Gastrocnemius medialis (tissue), 4 donors: ENCODE measurements at regions of chr6 and their contacts with region 1.

Region 1: DNA sequence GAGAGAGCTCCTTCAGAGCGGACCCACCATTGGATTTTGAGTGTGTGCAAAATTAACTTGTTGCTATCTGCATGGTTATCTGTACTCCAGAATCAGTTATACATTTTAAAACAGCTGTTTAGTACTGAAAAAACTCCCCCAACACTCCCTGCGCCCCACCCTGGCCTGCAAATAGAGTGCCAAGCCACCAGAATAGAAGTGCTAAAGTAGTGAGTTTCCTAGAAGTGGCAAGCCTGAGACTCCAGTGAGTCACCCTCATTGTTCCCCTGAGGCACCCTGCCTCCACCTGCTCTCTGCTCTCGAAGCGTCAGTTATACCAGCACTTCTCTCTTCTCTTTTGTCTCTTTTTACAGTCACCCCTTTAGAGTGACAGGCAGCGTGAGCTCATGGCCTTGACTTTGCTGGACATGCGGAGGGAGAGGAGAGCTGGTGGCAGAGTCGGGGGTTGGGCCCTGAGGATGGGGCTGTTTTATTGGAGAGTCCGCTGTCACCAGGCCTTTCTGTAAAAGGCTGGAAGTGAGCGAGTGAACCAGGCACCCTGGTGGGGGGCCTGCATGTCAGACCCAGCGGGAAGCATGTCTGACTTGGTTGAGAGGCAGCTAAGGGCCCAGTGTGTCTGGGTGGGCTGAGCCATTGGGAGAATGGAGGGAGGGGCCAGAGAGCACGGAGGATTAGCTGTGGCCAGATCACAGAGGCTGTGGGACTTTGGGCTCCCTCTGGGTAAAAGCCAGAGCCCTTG is 10.4 kb downstream of the IGF2R start:
- DNase-seq: peak; percentile 57 to 79
- ATAC-seq: peak; percentile 63 to 80
- H3K4me3 ChIP-seq: peak overlapping the region in 1 of 4 donors; percentile 31
- H3K27ac ChIP-seq: peak overlapping the region; percentile 89 to 98 (median 96)
- H3K4me1 ChIP-seq: peaks cover 98 to 99% of the 10 kb centered on the region in 2 donors
- H3K27me3 ChIP-seq: no peaks in the 10 kb centered on the region
- CTCF ChIP-seq: no peak
- POLR2A ChIP-seq: peak in 1 of 2 donors; percentile 39

Region 2: DNA sequence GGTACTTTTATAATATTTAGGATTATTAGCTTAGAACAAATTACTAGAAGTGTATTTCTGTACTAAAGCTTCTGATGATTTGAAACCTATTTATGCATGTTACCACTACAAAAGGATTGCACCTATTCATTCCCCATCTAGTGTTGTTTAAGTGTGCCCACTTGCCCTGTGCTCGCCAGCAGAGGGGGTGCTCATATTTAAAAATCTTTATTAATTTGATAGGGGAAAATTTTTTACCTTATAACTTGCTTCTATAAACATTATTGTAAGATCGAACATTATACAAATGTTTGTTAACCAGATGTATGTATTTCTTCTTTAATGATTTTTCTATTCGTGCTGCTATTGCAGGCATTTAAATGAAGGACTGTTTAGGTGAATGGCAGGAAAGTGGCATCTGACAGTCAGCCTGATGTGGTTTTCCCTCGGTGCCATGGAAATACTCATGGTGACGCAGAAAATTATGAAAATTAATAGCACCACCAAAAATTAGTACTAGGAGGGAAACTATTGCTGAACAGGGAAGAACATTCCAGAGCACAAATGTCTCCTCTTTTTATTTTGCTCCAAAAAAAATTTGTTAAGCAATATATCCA is 854.2 kb before region 1 on chr6:
- in situ Hi-C with region 1: no loop called
- intact Hi-C with region 1: loop called (anchors 5 kb)
- DNase-seq: no peak
- ATAC-seq: no peak
- H3K4me3 ChIP-seq: no peak overlapping the region
- H3K27ac ChIP-seq: peak overlapping the region; percentile 89 to 93 (median 90)
- H3K4me1 ChIP-seq: peaks cover 16 to 40% of the 10 kb centered on the region in 2 donors
- H3K27me3 ChIP-seq: no peaks in the 10 kb centered on the region
- CTCF ChIP-seq: no peak
- POLR2A ChIP-seq: no peak

Region 3: DNA sequence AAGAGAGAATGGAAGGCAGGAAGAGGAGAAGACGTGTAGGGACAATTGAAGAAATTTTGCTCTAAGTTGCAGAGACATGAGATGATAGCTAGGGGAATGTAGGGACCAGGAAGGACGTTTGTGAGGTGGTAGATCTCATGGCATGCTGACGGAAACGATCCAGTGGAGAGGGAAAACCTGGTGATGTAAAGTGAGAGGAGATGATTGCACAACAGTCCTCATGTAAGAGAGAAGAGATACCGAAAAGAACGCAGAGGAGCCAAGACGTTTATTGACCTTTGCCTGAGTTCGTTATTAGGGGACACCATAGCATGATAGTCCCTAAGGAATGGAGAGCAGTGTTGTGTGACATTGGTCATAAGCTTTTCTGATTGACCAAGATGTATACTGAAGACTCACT is 44.8 kb after region 1 on chr6:
- in situ Hi-C with region 1: no loop called
- intact Hi-C with region 1: loop called (anchors 1 kb)
- DNase-seq: peak; percentile 60 to 73
- ATAC-seq: peak; percentile 95
- H3K4me3 ChIP-seq: no peak overlapping the region
- H3K27ac ChIP-seq: peak overlapping the region; percentile 78 to 81 (median 80)
- H3K4me1 ChIP-seq: peaks cover 34 to 35% of the 10 kb centered on the region in 2 donors
- H3K27me3 ChIP-seq: no peaks in the 10 kb centered on the region
- CTCF ChIP-seq: no peak
- POLR2A ChIP-seq: no peak

Region 4: GRCh38 chr6:160030103-160030502 is 50.8 kb after region 1 on chr6:
- in situ Hi-C with region 1: loop called in 1 of 4 experiments (anchors 10 kb)
- intact Hi-C with region 1: no loop called
- DNase-seq: peak; percentile 77 to 89
- ATAC-seq: peak; percentile 88 to 93
- H3K4me3 ChIP-seq: no peak overlapping the region
- H3K27ac ChIP-seq: peak overlapping the region; percentile 80 to 83 (median 81)
- H3K4me1 ChIP-seq: peaks cover 34 to 42% of the 10 kb centered on the region in 2 donors
- H3K27me3 ChIP-seq: no peaks in the 10 kb centered on the region
- CTCF ChIP-seq: peak in 2 of 5 experiments; percentile 16 to 18
- POLR2A ChIP-seq: peak; percentile 4 to 36

Region 5: GRCh38 chr6:160132776-160133338 is 153.6 kb after region 1 on chr6:
- in situ Hi-C with region 1: no loop called
- intact Hi-C with region 1: no loop called
- DNase-seq: no peak
- ATAC-seq: no peak
- H3K4me3 ChIP-seq: no peak overlapping the region
- H3K27ac ChIP-seq: no peak overlapping the region
- H3K4me1 ChIP-seq: no peaks in the 10 kb centered on the region
- H3K27me3 ChIP-seq: no peaks in the 10 kb centered on the region
- CTCF ChIP-seq: no peak
- POLR2A ChIP-seq: no peak

Region 6: DNA sequence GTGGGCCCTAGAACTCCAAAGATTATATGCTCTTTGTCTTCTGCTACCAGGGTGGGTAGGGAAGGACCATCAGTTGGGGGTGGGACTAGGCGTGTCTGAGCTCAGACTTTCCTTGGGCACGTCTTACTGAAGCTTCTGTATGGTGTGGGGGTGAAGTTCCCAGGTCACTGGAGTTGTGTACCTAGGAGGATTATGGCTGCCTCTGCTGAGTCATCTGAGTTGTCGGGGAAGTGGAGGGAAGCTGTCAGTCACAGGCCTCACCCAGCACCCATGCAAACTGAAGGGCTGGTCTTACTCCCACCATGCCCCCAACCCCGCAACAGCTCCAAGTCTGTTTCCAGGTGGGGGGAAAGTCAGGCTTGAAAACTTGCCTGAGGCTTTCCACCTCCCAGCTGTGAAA is 594.6 kb after region 1 on chr6:
- in situ Hi-C with region 1: no loop called
- intact Hi-C with region 1: no loop called
- DNase-seq: no peak
- ATAC-seq: no peak
- H3K4me3 ChIP-seq: no peak overlapping the region
- H3K27ac ChIP-seq: no peak overlapping the region
- H3K4me1 ChIP-seq: no peaks in the 10 kb centered on the region
- H3K27me3 ChIP-seq: no peaks in the 10 kb centered on the region
- CTCF ChIP-seq: no peak
- POLR2A ChIP-seq: no peak